GM12878 (cell line): ENCODE measurements at regions of chr1 and their contacts with region 1.

Region 1: DNA sequence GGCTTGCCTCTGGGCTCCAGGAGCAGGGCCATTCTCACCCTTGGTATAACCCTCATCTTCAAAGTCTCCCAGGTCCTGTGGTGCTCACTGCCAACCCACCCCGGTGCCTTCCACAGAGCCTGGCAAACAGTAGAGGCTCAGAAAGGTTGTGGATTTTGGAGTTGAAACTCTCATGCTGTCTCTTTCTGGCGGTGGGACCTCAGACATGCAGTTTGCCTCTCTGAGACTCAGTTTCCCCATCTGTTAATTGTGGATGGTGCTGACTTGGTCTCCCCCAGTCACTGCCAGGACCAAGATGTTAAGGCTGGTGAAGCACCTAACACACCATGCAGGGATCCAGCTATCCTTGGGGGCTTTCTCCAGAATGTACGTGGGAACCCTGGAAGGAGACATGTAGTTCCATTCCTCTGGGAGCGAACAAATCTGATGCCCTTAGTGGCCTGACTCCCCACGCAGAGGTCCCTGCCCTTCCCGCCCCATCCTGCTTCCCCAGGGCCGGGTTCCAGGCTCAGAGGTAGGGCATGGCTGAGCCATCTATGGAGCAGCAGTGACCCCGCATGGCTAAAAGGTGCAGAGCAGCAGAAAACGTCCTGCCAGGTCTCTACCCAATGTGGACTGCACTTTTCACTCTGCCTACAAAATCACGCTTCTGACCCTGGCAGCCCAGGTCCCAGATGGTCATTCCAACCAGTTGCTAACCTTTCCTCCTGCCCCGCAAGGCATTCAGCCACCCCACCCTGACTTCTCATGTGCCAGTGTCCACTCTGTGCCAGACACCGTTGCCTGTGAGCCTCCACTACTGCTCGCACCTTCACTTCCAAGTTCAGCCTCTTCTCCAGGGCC is 9.2 kb upstream of the TTC22 start:
- DNase-seq: no peak
- ATAC-seq: peak; percentile 82
- H3K4me3 ChIP-seq: no peak overlapping the region
- H3K27ac ChIP-seq: no peak overlapping the region
- H3K4me1 ChIP-seq: peaks cover 13% of the 10 kb centered on the region
- H3K27me3 ChIP-seq: no peaks in the 10 kb centered on the region
- CTCF ChIP-seq: peak; percentile 91 to 96 (median 91)
- EP300 ChIP-seq: no peak
- POLR2A ChIP-seq: no peak
- RAD21 ChIP-seq: peak; percentile 98

Region 2: DNA sequence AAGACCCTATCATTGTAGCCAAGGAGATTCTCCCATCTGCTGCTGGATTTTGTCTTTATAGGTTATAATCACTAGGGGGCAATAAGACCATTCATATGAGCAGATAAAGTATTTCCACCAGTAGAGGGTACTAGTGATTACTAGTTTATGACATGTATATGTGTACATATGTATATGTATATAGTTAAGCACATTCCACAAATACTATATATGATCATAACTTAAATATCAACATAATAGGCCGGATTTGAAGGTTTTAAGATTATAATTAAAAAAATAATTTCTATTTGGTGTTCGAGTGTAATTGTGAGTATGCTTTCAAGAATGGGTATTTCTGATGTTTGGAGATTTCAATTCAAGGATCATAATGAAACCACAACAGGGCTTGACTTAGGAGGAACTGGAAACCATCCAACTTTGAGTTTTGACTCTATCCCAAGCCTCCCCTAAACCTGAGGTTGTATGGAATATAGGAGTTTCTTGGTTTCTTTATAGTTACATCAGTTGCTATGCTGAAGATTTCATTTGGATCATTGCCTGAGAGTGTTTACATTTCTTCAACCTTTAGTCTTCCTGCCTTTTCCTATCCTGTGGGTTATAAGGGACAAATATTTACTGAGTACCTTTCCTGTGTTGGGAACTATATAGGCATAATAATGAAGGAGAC is 740.0 kb before region 1 on chr1:
- CTCF ChIA-PET with region 1: interaction called, 4 read pairs
- POLR2A ChIA-PET with region 1: no interaction called
- RAD21 ChIA-PET with region 1: no interaction called
- SMC1A ChIA-PET with region 1: no interaction called
- in situ Hi-C with region 1: no loop called
- intact Hi-C with region 1: loop called (anchors 1 kb)
- DNase-seq: no peak
- ATAC-seq: peak; percentile 93
- H3K4me3 ChIP-seq: no peak overlapping the region
- H3K27ac ChIP-seq: no peak overlapping the region
- H3K4me1 ChIP-seq: no peaks in the 10 kb centered on the region
- H3K27me3 ChIP-seq: no peaks in the 10 kb centered on the region
- CTCF ChIP-seq: peak; percentile 59 to 97 (median 61); a peak in 4 of 6 replicates
- EP300 ChIP-seq: no peak
- POLR2A ChIP-seq: no peak
- RAD21 ChIP-seq: peak; percentile 76

Region 3: GRCh38 chr1:54180701-54181360 is 629.5 kb before region 1 on chr1:
- CTCF ChIA-PET with region 1: no interaction called
- POLR2A ChIA-PET with region 1: no interaction called
- RAD21 ChIA-PET with region 1: no interaction called
- SMC1A ChIA-PET with region 1: no interaction called
- in situ Hi-C with region 1: no loop called
- intact Hi-C with region 1: loop called (anchors 5 kb)
- DNase-seq: no peak
- ATAC-seq: no peak
- H3K4me3 ChIP-seq: no peak overlapping the region
- H3K27ac ChIP-seq: no peak overlapping the region
- H3K4me1 ChIP-seq: no peaks in the 10 kb centered on the region
- H3K27me3 ChIP-seq: no peaks in the 10 kb centered on the region
- CTCF ChIP-seq: no peak
- EP300 ChIP-seq: no peak
- POLR2A ChIP-seq: no peak
- RAD21 ChIP-seq: no peak

Region 4: GRCh38 chr1:54499360-54500106 is 310.8 kb before region 1 on chr1:
- CTCF ChIA-PET with region 1: interaction called, 3 read pairs
- POLR2A ChIA-PET with region 1: no interaction called
- RAD21 ChIA-PET with region 1: no interaction called
- SMC1A ChIA-PET with region 1: no interaction called
- in situ Hi-C with region 1: no loop called
- intact Hi-C with region 1: loop called (anchors 5 kb)
- DNase-seq: no peak
- ATAC-seq: peak; percentile 52
- H3K4me3 ChIP-seq: no peak overlapping the region
- H3K27ac ChIP-seq: no peak overlapping the region
- H3K4me1 ChIP-seq: no peaks in the 10 kb centered on the region
- H3K27me3 ChIP-seq: peaks cover 6 to 9% of the 10 kb centered on the region in 2 experiments; a peak in 3 of 4 replicates
- CTCF ChIP-seq: peak in 2 of 3 experiments; percentile 22 to 31; a peak in 3 of 6 replicates
- EP300 ChIP-seq: no peak
- POLR2A ChIP-seq: no peak
- RAD21 ChIP-seq: no peak

Region 5: GRCh38 chr1:54671985-54672608 is 138.2 kb before region 1 on chr1:
- CTCF ChIA-PET with region 1: interaction called, 10 read pairs
- POLR2A ChIA-PET with region 1: no interaction called
- RAD21 ChIA-PET with region 1: interaction called, 7 read pairs
- SMC1A ChIA-PET with region 1: interaction called, 8 read pairs
- in situ Hi-C with region 1: loop called (anchors 5 kb)
- intact Hi-C with region 1: loop called (anchors 1 kb)
- DNase-seq: peak; percentile 17
- ATAC-seq: peak; percentile 96
- H3K4me3 ChIP-seq: no peak overlapping the region
- H3K27ac ChIP-seq: no peak overlapping the region
- H3K4me1 ChIP-seq: no peaks in the 10 kb centered on the region
- H3K27me3 ChIP-seq: peaks cover 0 to 2% of the 10 kb centered on the region in 2 experiments; a peak in 2 of 4 replicates
- CTCF ChIP-seq: peak; percentile 88 to 98 (median 88)
- EP300 ChIP-seq: no peak
- POLR2A ChIP-seq: no peak
- RAD21 ChIP-seq: peak; percentile 95

Region 6: DNA sequence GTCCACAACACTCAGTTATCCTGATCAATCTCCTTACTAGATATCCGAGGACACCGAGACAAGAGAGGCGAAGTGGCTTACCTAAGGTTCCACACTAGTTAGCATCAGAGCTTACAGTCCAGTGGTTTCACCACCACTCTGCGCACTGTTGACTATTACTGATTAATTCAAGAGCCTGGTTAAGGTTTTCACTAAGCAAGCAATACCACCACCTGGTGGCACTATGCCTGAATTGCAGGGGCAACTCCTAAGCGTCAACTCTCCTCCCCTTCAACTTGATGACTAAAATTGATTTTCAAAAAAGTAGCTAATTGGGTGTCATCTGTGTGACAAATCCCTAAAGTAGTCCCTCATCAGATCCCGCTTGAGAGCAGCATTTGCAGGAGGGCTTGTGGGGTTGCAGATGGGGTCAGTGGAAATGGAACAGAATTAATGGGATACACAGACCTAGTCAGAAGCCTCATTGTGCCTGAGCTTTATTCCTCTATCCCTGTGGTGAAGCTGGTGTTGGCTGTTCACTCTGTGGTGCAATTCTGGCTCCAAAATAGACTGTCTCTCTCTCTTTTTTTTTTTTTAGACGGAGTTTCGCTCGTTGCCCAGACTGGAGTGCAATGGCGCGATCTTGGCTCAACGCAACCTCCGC is 18.3 kb before region 1 on chr1:
- CTCF ChIA-PET with region 1: interaction called, 12 read pairs
- POLR2A ChIA-PET with region 1: no interaction called
- RAD21 ChIA-PET with region 1: interaction called, 3 read pairs
- SMC1A ChIA-PET with region 1: interaction called, 5 read pairs
- in situ Hi-C with region 1: no loop called
- intact Hi-C with region 1: no loop called
- DNase-seq: no peak
- ATAC-seq: peak; percentile 38
- H3K4me3 ChIP-seq: no peak overlapping the region
- H3K27ac ChIP-seq: no peak overlapping the region
- H3K4me1 ChIP-seq: no peaks in the 10 kb centered on the region
- H3K27me3 ChIP-seq: no peaks in the 10 kb centered on the region
- CTCF ChIP-seq: peak; percentile 20 to 78 (median 69)
- EP300 ChIP-seq: no peak
- POLR2A ChIP-seq: no peak
- RAD21 ChIP-seq: peak; percentile 43